ENCODE measurements at regions of chr5 and their contacts with region 1.

Region 1: DNA sequence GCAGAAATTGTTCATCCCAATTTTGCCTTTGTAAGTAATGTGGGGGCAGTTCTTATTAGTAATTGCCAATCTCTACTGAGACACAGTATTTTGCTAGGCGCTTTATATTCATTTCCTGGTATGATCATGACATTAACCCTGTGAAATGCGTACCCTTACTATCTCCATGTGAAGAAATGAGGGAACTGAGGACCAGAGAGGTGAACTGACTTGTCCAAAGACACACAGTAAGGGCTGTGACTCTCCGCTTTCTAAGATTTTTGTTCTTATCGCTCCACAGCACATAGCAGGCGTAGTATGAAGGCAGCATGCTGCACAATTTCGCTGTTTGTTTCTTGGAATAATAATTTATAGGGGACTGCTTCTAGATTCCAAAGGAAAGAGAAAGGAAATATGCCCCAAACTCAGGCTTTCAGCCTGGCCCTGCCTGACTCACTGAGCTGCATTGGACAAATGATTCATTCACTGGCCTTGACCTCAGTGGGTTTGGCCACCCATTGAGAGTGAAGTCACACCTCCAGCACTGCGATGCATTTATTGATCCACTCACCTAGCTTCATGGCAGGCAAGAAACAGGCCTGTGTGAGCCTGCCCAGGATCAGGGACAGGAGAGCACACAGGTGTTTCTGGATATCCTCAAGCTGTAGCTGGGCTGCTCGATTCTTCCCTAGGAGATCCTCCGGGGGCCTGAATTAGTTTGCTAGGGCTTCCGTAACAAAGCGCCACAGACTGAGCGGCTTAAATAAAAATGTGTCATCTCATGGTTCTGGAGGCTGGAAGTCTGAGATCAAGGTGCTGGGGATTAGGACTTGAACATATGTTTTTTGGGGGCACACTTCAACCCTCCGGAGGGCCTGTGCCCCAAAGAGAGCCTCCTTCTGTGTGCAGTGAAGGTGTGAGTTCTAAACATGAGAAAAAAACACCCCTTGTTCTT is 7.2 kb upstream of the DUSP1 start:
- DNase-seq: no peak
- ATAC-seq: peak; percentile 26
- H3K4me3 ChIP-seq: peak overlapping the region; percentile 10
- H3K4me3 Mint-ChIP-seq: peak overlapping the region in 9 of 10 donors; percentile 60 to 81 (median 64)
- H3K27ac ChIP-seq: peak overlapping the region; percentile 89
- H3K27ac Mint-ChIP-seq: peak overlapping the region; percentile 91 to 98 (median 93)
- H3K4me1 ChIP-seq: peaks cover 23 to 27% of the 10 kb centered on the region in 2 donors
- H3K4me1 Mint-ChIP-seq: peaks cover 18 to 46% (median 40%) of the 10 kb centered on the region in 7 donors
- H3K27me3 ChIP-seq: no peaks in the 10 kb centered on the region
- H3K27me3 Mint-ChIP-seq: peaks cover 0 to 3% (median 0%) of the 10 kb centered on the region in 5 donors

Region 2: GRCh38 chr5:171387345-171387969 is 1390.7 kb before region 1 on chr5 and contains the start of gene NPM1:
- CTCF ChIA-PET with region 1: no interaction called
- POLR2A ChIA-PET with region 1: interaction called, 5 read pairs
- intact Hi-C with region 1: loop called (anchors 1 to 5 kb)
- DNase-seq: peak; percentile 90 to 99 (median 98)
- ATAC-seq: peak; percentile 93
- H3K4me3 ChIP-seq: peak within 1 kb of the TSS; percentile 91
- H3K4me3 Mint-ChIP-seq: peak within 1 kb of the TSS; percentile 92 to 99 (median 98)
- H3K27ac ChIP-seq: peak within 1 kb of the TSS; percentile 88
- H3K27ac Mint-ChIP-seq: peak within 1 kb of the TSS; percentile 96 to 100 (median 98)
- H3K4me1 ChIP-seq: peaks cover 31 to 40% of the 10 kb centered on the region in 2 donors
- H3K4me1 Mint-ChIP-seq: peaks cover 25 to 52% (median 49%) of the 10 kb centered on the region in 7 donors
- H3K27me3 ChIP-seq: no peaks in the 10 kb centered on the region
- H3K27me3 Mint-ChIP-seq: peaks cover 0 to 6% (median 0%) of the 10 kb centered on the region in 5 donors
- total RNA-seq, gene NPM1: 807 to 1,238 (median 1,192) TPM

Region 3: DNA sequence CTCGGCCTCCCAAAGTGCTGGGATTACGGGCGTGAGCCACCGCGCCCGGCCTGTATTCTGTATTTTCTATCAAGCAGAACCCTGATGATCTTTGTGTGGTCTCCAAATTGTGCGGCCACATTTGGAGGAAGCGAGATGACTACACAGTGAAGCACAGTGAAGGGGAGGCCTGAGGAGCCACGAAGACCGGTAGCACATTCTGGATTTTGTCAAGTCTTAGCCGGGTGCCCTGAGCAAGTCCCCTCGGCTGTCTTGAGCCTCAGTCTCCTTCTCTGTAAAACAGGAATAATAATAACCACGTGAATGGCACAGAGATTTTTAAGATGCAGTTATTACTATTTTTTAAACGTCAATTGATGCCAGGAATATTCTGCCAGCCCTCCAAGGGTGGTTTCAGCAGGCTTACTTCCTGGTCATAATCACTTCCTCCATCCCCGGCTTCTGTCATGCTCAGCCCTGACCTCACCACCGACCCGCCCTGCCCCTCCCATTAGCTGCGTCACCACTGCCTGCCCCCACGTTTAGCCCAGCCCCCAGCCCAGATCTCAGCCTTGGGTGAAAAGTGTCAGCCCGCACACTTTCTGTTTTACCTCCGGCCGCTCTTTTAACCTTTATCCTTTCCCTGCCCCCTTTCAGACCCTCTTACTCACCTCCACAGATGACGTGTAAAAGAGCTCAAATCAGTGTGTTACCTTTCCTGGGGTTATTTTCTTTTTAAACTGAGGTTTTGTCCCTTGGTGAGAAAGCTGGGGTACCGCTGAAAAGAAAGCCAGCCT is 28.9 kb after region 1 on chr5:
- CTCF ChIA-PET with region 1: interaction called, 7 read pairs
- POLR2A ChIA-PET with region 1: interaction called, 3 read pairs
- intact Hi-C with region 1: loop called (anchors 1 kb)
- DNase-seq: peak; percentile 24 to 78 (median 52)
- ATAC-seq: peak; percentile 98
- H3K4me3 ChIP-seq: peak overlapping the region; percentile 45
- H3K4me3 Mint-ChIP-seq: peak overlapping the region; percentile 73 to 87 (median 84)
- H3K27ac ChIP-seq: peak overlapping the region; percentile 74
- H3K27ac Mint-ChIP-seq: peak overlapping the region; percentile 86 to 98 (median 93)
- H3K4me1 ChIP-seq: peaks cover 0 to 12% of the 10 kb centered on the region in 2 donors
- H3K4me1 Mint-ChIP-seq: peaks cover 9 to 17% (median 13%) of the 10 kb centered on the region in 7 donors
- H3K27me3 ChIP-seq: no peaks in the 10 kb centered on the region
- H3K27me3 Mint-ChIP-seq: peaks cover 0 to 2% (median 0%) of the 10 kb centered on the region in 5 donors

Region 4: DNA sequence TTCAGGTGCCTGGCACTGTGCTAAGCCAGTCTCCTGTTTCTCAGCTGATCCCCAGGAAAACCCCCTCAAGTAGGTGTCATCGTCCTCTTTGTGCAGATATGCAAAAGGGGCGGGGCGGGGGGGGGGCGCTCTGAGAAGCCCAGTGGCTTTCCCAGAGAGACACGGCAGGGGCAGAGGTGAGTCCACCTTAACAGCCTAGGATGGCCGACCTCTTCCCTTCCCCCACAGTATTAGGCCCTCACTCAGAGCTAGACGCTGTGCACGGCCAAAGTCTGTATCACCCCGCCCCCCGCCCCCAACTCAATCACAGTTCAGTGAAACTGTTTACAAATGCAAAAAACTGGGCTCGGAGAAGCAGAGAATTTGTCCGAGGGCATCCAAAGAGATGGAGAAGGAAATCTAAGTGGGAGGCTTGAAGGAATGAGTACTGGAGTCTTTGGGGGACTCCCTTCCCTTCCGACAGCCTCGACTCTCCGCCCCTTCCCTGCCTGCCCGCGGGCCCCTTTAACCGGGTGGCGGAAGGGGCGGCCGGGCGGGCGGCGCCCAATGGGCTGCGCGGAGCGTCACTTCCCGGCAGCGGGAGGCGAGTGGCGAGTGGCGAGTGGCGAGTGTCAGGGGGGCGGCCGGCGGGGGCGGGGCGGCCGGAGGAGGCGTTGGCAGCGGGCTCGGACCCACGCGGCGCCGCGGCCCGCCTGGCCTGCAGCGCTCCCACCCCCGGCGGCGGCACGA is 55.7 kb after region 1 on chr5 and contains the start of gene ERGIC1:
- CTCF ChIA-PET with region 1: interaction called, 23 read pairs
- POLR2A ChIA-PET with region 1: interaction called, 61 read pairs
- intact Hi-C with region 1: loop called (anchors 1 kb)
- DNase-seq: peak; percentile 49 to 84 (median 58)
- ATAC-seq: peak; percentile 87
- H3K4me3 ChIP-seq: peak within 1 kb of the TSS; percentile 68
- H3K4me3 Mint-ChIP-seq: peak within 1 kb of the TSS; percentile 85 to 93 (median 90)
- H3K27ac ChIP-seq: peak within 1 kb of the TSS; percentile 87
- H3K27ac Mint-ChIP-seq: peak within 1 kb of the TSS; percentile 87 to 97 (median 94)
- H3K4me1 ChIP-seq: peaks cover 23 to 38% of the 10 kb centered on the region in 2 donors
- H3K4me1 Mint-ChIP-seq: peaks cover 25 to 50% (median 40%) of the 10 kb centered on the region in 7 donors
- H3K27me3 ChIP-seq: no peaks in the 10 kb centered on the region
- H3K27me3 Mint-ChIP-seq: no peaks in the 10 kb centered on the region
- total RNA-seq, gene ERGIC1: 44.4 to 71.3 (median 53.5) TPM

Measured in naive thymus-derived CD4-positive, alpha-beta T cell (primary cell).